ENCODE measurements at regions of chr15 and their contacts with region 1.

Region 1: GRCh38 chr15:40593588-40594428 is at the start of gene KNL1:
- DNase-seq: peak; percentile 87
- CTCF ChIP-seq: no peak

Region 2: DNA sequence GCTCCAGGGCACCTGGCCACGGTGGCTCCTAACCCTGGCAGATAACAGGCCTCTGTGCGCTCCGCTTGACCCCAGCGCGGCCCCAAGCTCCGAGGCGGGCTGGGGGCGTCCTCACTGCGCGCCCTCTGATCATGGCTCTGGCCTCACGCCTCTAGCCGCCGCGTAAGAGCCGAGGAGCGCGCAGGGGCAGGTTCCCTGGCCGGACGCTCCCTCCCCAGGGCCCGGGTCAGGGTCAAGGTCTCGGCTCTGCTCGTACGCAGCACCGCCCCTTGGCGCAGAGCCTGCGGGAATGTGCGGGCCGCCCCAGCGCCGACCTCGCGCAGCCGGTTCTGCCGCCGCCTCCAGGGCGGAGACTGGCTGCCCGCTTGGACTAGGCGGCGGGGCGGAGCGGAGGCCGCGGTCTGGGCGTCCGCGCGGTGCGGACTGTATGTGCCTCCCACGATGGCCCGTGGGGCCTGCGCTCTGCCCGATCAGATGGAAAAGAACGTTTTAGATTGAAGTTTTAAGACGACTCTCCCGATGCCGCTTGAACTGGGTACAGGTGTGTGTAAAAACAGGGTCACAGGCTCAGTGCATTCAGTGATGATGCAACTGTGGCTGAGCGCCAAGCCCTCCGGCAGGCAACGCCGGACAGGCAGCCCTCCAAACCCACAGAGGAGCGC is 82.2 kb before region 1 on chr15:
- CTCF ChIA-PET with region 1: no interaction called
- POLR2A ChIA-PET with region 1: no interaction called
- DNase-seq: peak; percentile 65
- CTCF ChIP-seq: no peak

Region 3: GRCh38 chr15:40569139-40569953 is 24.5 kb before region 1 on chr15 and contains the start of gene RPUSD2:
- CTCF ChIA-PET with region 1: interaction called, 15 read pairs
- POLR2A ChIA-PET with region 1: interaction called, 5 read pairs
- DNase-seq: peak; percentile 94
- CTCF ChIP-seq: no peak

Region 4: DNA sequence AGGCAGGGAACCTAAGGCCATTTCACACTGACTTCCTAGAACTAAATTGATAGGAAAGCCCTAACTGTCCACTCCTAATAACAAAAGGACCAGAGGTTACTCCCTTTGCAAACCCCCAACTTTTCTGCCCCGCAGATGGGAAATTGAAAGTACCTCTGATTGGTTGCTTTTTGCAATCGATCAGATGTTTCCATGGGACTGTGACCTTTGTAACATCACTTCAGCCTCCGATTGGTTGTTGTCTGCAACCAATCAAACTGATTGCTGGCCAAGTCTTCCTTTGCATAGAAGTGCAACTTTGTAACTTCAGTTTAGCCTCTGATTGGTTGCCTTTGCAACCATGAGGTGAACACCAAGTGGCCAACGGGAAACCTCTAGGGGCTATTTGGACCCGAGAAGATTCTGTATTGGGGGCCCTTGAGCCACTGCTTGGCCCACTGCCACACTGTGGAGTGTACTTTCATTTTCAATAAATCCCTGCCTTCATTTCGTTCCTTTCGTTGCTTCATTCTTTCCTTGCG is 11.0 kb before region 1 on chr15:
- CTCF ChIA-PET with region 1: interaction called, 28 read pairs
- POLR2A ChIA-PET with region 1: no interaction called
- DNase-seq: peak; percentile 35
- CTCF ChIP-seq: no peak

Region 5: DNA sequence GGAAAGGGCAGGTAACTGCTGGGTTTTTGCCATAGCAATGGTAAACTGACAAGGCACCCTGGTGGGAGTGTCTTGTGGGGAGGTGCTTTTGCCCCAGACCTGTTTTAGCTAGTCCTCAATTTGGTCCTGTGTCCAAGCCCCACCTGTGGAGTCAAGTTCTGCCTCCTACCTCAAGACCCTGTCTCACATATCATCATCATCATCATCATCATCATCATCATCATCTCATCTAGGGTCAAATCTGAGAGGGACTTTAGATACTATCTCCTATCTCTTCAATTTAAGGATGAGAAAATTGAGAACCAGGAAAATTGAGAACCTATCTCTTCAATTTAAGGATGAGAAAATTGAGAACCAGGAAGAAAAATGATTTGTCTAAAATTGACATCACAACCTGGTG is 10.1 kb after region 1 on chr15:
- CTCF ChIA-PET with region 1: interaction called, 32 read pairs
- POLR2A ChIA-PET with region 1: no interaction called
- DNase-seq: no peak
- CTCF ChIP-seq: no peak

Measured in GM10248 (cell line).